ENCODE measurements at regions of chr7 and their contacts with region 1.

Region 1: GRCh38 chr7:91953618-91954017 is 13.0 kb downstream of the AKAP9 start:
- DNase-seq: no peak
- ATAC-seq: no peak
- H3K4me3 ChIP-seq: no peak overlapping the region
- H3K27ac ChIP-seq: no peak overlapping the region
- H3K4me1 ChIP-seq: peaks cover 3 to 47% (median 20%) of the 10 kb centered on the region in 9 donors
- H3K27me3 ChIP-seq: no peaks in the 10 kb centered on the region
- CTCF ChIP-seq: peak in 2 of 9 donors; percentile 18 to 24

Region 2: DNA sequence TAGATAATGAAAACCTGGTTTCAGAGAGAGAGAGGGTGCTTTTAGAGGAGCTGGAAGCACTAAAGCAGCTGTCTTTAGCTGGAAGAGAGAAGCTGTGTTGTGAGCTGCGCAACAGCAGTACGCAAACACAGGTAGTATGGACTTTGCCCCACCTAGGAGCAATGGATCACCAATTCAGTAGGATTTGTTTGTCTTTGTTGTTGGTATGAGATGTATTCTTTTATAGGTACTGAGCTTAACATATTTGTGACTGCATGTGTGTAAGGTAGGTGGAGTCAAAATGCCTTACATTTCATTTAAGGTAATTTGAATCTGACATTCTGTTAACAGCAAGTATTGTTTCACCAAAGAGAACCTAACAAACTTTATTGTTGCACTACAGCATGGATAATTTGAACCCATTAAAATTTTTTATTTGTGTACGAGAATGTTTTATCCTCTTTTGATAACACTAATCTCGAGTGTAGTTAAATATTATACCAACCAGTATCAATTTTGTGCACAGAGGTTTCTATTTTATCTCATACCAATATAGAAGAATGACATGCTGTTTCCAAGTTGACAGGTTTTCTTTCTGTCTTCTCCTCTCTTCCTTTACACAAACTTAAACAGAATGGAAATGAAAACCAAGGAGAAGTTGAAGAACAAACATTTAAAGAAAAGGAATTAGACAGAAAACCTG is 88.6 kb after region 1 on chr7:
- intact Hi-C with region 1: loop called in 1 of 10 experiments (anchors 10 kb)
- DNase-seq: no peak
- ATAC-seq: peak in 1 of 8 donors; percentile 18
- H3K4me3 ChIP-seq: no peak overlapping the region
- H3K27ac ChIP-seq: peak overlapping the region in 8 of 10 donors; percentile 18 to 84 (median 76)
- H3K4me1 ChIP-seq: peaks cover 0 to 28% (median 4%) of the 10 kb centered on the region in 9 donors
- H3K27me3 ChIP-seq: no peaks in the 10 kb centered on the region
- CTCF ChIP-seq: no peak

Region 3: DNA sequence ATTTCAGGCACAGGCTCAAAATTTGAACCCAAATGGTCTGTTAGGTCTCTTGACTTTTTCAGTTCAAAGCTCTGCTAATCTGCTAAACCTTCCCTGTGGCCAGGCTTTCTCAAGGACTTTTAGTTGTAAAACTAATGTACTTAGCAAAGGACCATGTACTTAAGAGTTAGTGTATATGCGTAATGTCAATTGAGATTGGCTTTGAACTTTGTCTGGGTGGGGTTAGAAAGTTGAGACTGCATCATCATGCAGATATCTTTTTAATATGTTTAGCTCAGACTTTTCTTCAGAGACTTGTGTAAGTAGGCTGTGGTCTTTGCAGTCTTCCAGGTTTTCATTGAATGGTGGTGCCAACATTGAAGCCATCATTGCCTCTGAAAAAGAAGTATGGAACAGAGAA is 146.9 kb after region 1 on chr7:
- intact Hi-C with region 1: no loop called
- DNase-seq: no peak
- ATAC-seq: no peak
- H3K4me3 ChIP-seq: no peak overlapping the region
- H3K27ac ChIP-seq: no peak overlapping the region
- H3K4me1 ChIP-seq: no peaks in the 10 kb centered on the region
- H3K27me3 ChIP-seq: no peaks in the 10 kb centered on the region
- CTCF ChIP-seq: no peak

Region 4: DNA sequence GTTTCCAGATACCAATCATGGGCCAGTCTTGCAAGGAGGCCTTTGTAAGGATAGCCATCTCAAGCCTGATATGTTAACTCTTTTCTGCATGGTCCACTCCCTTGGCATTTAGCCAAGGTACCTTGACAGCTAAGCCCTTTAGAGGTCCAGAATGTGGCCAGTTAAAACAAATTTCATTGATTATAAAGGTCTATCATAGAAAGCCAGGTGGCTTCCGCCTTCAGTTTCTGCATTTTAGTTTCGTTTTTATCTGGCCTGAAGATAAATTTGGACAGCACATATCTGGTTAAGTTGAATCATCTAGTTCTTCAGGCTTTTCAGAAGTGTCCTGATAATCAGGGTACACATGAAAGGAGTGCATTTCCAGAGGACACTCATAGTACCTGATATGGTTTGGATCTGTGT is 322.8 kb after region 1 on chr7:
- intact Hi-C with region 1: no loop called
- DNase-seq: no peak
- ATAC-seq: no peak
- H3K4me3 ChIP-seq: no peak overlapping the region
- H3K27ac ChIP-seq: no peak overlapping the region
- H3K4me1 ChIP-seq: peaks cover 0 to 26% (median 9%) of the 10 kb centered on the region in 9 donors
- H3K27me3 ChIP-seq: no peaks in the 10 kb centered on the region
- CTCF ChIP-seq: no peak